RWPE1 (cell line): ENCODE measurements at regions of chr20 and their contacts with region 1.

Region 1: DNA sequence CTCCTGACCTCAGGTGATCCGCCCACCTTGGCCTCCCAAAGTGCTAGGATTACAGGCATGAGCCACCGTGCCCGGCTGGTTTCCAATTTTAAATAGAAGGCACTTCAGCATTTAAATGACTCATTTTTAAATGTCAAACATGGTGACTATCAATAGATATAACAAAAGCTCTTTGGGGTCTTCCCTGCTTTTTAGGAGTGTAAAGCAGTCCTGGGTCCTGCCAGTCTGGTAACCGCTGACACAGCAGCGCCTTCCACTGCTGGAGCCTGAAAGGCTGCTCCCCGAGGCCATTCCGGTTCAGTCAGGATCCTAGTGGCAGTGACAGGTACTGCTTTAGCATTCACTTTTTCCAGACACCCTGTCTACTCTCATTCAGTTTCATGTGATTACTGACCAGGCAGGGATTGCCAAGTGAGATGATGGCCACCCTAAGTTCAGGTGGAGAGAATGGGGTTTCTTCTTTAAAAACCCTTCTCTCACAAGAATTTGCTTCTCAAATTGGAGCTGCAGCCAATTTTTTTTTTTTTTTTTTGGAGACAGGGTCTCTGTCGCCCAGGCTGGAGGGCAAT is 5.1 kb downstream of the DIDO1 start:
- DNase-seq: peak; percentile 69
- H3K27ac ChIP-seq: peak overlapping the region; percentile 55
- CTCF ChIP-seq: peak; percentile 47

Region 2: DNA sequence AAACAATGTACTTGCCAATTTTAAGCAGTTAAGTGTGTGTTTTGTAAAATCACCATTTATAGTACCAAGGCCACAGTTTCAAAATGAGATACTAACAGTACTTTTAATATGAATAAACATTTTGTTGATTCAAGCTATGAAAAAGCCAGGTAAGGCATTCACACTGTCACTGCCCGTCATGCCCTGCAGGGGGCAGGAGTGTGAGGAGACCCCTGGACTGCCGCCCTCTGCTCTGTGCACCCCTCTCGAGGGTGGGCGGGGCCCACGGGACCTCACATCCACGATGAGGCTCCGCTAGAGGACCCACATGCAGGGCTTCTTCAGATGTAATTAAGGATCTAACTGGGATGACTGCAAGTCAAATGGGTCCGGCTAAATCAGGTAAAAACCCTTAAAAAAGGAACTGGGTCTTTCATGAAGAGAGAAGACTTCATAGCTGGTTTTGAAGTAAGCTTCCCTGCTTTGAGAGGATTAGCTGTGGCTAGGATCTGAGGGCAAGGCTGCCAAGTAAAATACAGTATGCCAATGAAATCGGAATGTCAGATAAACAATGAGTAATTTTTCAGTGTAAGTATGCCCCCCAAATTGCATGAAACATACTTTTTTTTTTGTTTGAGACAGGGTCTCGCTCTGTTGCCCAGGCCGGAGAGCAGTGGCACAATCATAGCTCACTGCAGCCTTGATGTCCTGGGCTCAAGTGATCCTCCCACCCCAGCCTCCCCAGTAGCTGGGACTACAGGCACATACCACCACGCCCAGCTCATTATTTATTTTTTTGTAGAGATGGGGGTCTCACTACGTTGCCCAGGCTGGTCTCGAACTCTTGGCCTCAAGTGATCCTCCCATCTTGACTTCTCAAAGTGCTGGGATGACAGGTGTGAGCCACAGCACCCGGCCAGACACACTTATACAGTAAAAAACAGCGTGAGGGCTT is 13.6 kb before region 1 on chr20:
- CTCF ChIA-PET with region 1: interaction called, 11 read pairs
- POLR2A ChIA-PET with region 1: no interaction called
- DNase-seq: no peak
- H3K27ac ChIP-seq: peak overlapping the region; percentile 6
- CTCF ChIP-seq: peak; percentile 70

Region 3: GRCh38 chr20:62972270-62973032 is 51.2 kb after region 1 on chr20:
- CTCF ChIA-PET with region 1: no interaction called
- POLR2A ChIA-PET with region 1: no interaction called
- DNase-seq: peak; percentile 98
- H3K27ac ChIP-seq: no peak overlapping the region
- CTCF ChIP-seq: peak; percentile 98